Transverse colon (tissue), 4 donors: ENCODE measurements at regions of chr1 and their contacts with region 1.

Region 1: DNA sequence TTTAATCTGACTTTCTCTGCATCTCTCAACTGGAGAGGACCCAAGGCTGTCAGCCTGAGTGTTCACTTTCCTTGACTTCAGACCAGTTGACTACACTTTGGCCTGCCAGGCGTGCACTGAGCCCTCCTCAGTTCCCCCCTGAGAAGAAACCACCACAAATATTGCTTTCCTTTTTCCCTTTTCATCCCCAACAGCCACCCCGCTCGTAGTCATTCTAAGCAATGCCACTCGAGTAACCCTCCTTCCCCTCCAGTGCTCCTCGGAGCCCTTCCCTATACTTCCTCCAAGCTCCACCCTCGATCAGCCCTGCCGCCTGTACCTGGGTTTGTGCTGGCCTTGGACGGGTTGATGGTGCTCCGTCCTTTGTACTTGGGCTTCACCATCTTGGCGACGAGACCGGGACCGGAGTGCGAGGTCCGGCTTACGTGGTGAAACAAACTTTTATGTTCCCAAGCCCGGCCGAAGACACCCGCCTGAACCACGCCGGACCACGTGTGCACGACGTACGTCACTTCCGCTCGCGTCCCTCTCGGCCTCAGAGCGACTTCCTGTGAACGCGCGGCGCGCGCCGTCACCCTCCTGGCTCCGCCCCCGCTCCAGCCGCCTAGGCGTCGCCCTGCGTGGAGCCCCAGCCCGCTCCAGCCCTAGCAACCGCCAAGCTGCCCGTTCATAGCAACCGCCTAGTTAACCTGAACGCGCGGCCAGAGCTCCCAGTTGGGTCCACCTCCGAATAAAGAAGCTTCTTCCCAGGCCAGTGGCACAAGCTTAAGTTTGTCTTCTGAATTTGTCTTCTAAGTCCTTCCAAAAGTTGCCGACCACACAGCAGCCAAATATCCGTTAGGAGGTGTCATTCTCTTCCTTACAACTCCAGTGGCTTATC is at the start of gene GNL2:
- DNase-seq: peak; percentile 98
- H3K4me3 ChIP-seq: peak within 1 kb of the TSS; percentile 49 to 75 (median 58)
- H3K27ac ChIP-seq: peak within 1 kb of the TSS; percentile 81 to 89 (median 85)
- H3K4me1 ChIP-seq: peaks cover 14 to 19% (median 14%) of the 10 kb centered on the region in 4 donors
- H3K27me3 ChIP-seq: no peaks in the 10 kb centered on the region
- CTCF ChIP-seq: no peak
- EP300 ChIP-seq: no peak
- POLR2A ChIP-seq: peak; percentile 82
- total RNA-seq, gene GNL2: 33.5 to 58.4 (median 43.0) TPM

Region 2: DNA sequence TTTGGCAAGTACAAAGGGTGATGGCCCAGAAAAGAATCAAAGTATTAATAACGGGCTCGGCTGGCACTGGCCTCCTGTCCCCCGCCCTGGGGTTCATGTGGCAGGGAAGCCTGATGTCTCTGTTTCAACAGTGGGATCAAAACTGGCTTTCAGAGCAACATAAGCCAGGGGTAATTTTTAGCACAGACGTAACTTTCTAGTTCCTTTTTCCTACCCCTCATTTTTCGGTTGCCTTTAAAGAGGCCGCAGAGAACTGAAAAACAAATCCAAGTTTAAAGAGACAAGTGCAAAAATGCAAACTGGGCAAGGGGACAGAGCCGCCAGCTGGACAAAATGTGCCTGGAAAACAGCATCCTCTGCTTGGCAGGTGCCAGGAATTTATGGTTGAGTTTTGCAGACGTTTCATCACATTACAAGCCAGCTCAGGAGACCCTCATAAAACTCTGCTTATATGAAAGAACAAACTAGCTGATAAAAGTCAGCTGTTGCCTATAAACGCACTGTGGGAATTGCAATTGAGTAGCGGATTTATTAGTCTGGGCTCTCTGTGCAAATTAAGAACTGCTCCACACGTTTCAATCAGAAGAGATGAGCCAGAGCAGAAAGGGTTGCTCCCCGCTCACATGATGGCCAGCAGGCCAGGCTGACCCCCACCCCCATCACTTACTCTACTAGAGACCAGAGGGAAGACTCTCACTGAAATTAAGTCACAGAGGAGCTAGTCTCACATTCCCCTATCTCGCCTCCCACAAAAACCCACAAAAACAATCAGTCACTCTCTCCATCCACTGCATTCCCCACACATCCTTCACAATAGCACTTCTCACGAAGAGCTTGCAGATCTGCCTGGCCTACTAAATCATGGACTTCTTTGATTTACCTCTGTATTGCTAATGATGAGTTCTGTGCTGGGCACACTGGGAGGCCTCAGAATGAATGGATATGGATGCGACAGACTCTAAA is 80.9 kb after region 1 on chr1:
- in situ Hi-C with region 1: loop called (anchors 5 to 10 kb)
- intact Hi-C with region 1: loop called (anchors 5 kb)
- DNase-seq: peak; percentile 30
- H3K4me3 ChIP-seq: no peak overlapping the region
- H3K27ac ChIP-seq: peak overlapping the region; percentile 58 to 80 (median 60)
- H3K4me1 ChIP-seq: peaks cover 0 to 19% (median 5%) of the 10 kb centered on the region in 4 donors
- H3K27me3 ChIP-seq: peaks cover 8% of the 10 kb centered on the region
- CTCF ChIP-seq: no peak
- EP300 ChIP-seq: no peak
- POLR2A ChIP-seq: no peak

Region 3: GRCh38 chr1:37859507-37860345 is 264.0 kb after region 1 on chr1 and contains the start of gene MTF1:
- in situ Hi-C with region 1: loop called in 1 of 4 experiments (anchors 10 kb)
- intact Hi-C with region 1: no loop called
- DNase-seq: peak; percentile 98
- H3K4me3 ChIP-seq: peak within 1 kb of the TSS; percentile 75 to 99 (median 87)
- H3K27ac ChIP-seq: peak within 1 kb of the TSS; percentile 92 to 98 (median 96)
- H3K4me1 ChIP-seq: peaks cover 11 to 46% (median 19%) of the 10 kb centered on the region in 4 donors
- H3K27me3 ChIP-seq: no peaks in the 10 kb centered on the region
- CTCF ChIP-seq: peak; percentile 92 to 96 (median 95)
- EP300 ChIP-seq: no peak
- POLR2A ChIP-seq: peak; percentile 81
- total RNA-seq, gene MTF1: 2.2 to 20.2 (median 9.3) TPM